ENCODE measurements at regions of chr6 and their contacts with region 1.

Region 1: GRCh38 chr6:25601800-25602673 is 50.0 kb upstream of the SCGN start:
- DNase-seq: no peak
- H3K4me3 Mint-ChIP-seq: no peak overlapping the region
- H3K27ac Mint-ChIP-seq: no peak overlapping the region
- H3K4me1 Mint-ChIP-seq: no peaks in the 10 kb centered on the region
- H3K27me3 Mint-ChIP-seq: no peaks in the 10 kb centered on the region

Region 2: GRCh38 chr6:24861934-24862333 is 740.1 kb before region 1 on chr6:
- intact Hi-C with region 1: loop called (anchors 10 kb)
- DNase-seq: no peak
- H3K4me3 Mint-ChIP-seq: no peak overlapping the region
- H3K27ac Mint-ChIP-seq: peak overlapping the region; percentile 18
- H3K4me1 Mint-ChIP-seq: peaks cover 85% of the 10 kb centered on the region
- H3K27me3 Mint-ChIP-seq: no peaks in the 10 kb centered on the region

Region 3: DNA sequence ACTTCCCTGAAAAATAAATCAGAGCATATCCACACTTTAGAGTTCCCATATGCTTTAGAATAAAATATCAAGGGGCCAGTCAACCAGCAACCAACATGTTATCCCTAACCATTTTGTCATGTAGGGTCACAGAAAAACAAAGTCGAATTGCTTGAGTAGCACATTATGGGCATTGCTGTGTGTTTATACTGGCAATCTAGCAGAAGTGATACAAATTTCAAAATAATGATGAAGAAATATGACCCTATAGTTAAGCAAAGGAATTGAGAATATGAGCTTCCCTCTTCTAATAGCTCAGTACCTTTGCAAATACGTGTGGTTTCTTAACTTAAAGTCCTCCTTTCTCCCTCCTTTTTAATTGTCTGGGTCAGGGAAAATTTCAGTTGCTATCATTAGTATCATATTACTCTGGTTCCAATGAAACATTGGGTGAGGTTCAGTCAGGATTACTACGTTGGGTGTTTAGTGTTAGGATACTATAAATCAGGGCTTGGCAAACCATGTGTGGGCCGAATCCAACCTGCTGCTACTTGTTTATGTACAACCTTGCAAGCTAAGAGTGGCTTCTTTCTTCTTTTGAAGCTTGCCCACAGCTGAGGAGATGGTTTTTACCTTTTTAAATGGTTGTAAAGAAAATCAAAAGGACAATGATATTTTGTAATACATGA is 489.7 kb before region 1 on chr6:
- intact Hi-C with region 1: loop called (anchors 10 kb)
- DNase-seq: no peak
- H3K4me3 Mint-ChIP-seq: no peak overlapping the region
- H3K27ac Mint-ChIP-seq: no peak overlapping the region
- H3K4me1 Mint-ChIP-seq: peaks cover 50% of the 10 kb centered on the region
- H3K27me3 Mint-ChIP-seq: no peaks in the 10 kb centered on the region

Region 4: GRCh38 chr6:25223490-25223991 is 378.5 kb before region 1 on chr6:
- intact Hi-C with region 1: loop called (anchors 1 kb)
- DNase-seq: peak; percentile 24
- H3K4me3 Mint-ChIP-seq: peak overlapping the region; percentile 79
- H3K27ac Mint-ChIP-seq: no peak overlapping the region
- H3K4me1 Mint-ChIP-seq: peaks cover 14% of the 10 kb centered on the region
- H3K27me3 Mint-ChIP-seq: no peaks in the 10 kb centered on the region

Region 5: DNA sequence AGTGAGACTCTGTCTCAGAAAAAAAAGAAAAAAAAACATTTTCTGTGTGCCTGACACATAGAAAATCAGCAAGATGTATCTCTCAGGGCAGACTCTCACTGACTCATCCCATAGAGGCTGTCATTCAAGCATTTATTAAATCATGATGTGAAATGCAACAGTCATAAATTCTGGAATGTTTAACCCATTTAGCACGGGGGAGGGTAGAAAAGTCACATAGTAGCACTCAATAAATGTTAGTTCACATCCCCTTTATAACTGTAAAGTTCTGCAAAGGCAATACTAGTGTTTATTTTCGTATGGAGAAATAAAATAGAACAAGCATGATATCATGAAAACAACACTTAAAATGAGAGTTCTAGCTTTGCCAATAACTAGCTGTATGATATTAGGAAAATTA is 338.4 kb before region 1 on chr6:
- intact Hi-C with region 1: loop called (anchors 1 kb)
- DNase-seq: no peak
- H3K4me3 Mint-ChIP-seq: no peak overlapping the region
- H3K27ac Mint-ChIP-seq: no peak overlapping the region
- H3K4me1 Mint-ChIP-seq: peaks cover 7% of the 10 kb centered on the region
- H3K27me3 Mint-ChIP-seq: peaks cover 26% of the 10 kb centered on the region

Region 6: GRCh38 chr6:25469797-25470388 is 132.1 kb before region 1 on chr6:
- intact Hi-C with region 1: no loop called
- DNase-seq: no peak
- H3K4me3 Mint-ChIP-seq: no peak overlapping the region
- H3K27ac Mint-ChIP-seq: no peak overlapping the region
- H3K4me1 Mint-ChIP-seq: no peaks in the 10 kb centered on the region
- H3K27me3 Mint-ChIP-seq: no peaks in the 10 kb centered on the region

Region 7: DNA sequence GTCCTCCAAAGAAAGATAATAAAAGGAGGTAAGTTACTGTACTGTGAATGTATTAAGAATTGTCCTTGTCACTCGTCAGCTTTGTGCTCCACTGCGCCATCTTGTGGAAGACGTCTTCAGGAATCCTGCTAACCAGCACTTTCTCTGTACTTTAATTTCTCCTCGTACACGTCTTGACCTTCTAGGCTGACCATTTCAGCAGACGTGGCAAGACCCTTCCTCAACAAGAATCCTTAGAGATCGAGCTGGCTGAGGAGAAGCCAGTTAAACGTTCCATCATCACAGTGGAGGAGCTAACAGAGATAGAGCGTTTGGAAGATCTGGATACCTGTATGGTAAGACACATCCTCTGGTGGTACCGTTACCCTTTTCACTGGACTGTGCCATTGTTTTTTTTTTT is 45.5 kb before region 1 on chr6:
- intact Hi-C with region 1: loop called (anchors 1 kb)
- DNase-seq: peak; percentile 52
- H3K4me3 Mint-ChIP-seq: no peak overlapping the region
- H3K27ac Mint-ChIP-seq: no peak overlapping the region
- H3K4me1 Mint-ChIP-seq: no peaks in the 10 kb centered on the region
- H3K27me3 Mint-ChIP-seq: peaks cover 3% of the 10 kb centered on the region

Region 8: DNA sequence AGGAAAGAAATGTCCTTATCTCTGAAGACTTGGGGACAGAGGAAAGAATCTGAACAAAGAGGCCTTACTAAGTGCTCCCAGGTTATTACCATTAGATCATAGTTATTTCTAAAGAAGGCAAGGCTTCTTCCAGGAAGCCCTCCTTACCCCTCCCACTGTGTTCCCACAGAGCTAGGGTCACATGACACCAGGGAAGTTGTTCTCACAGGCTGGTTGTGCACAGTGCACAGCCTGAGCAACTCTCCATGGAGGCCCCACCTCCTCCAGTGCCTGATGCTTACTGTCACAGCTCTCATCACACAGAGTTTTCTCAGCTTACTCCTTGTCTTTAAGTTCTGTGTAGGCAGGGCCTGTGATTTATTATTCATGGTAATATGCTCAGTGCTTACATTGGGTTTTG is 18.9 kb before region 1 on chr6:
- intact Hi-C with region 1: no loop called
- DNase-seq: peak; percentile 6
- H3K4me3 Mint-ChIP-seq: no peak overlapping the region
- H3K27ac Mint-ChIP-seq: no peak overlapping the region
- H3K4me1 Mint-ChIP-seq: peaks cover 34% of the 10 kb centered on the region
- H3K27me3 Mint-ChIP-seq: no peaks in the 10 kb centered on the region

Region 9: DNA sequence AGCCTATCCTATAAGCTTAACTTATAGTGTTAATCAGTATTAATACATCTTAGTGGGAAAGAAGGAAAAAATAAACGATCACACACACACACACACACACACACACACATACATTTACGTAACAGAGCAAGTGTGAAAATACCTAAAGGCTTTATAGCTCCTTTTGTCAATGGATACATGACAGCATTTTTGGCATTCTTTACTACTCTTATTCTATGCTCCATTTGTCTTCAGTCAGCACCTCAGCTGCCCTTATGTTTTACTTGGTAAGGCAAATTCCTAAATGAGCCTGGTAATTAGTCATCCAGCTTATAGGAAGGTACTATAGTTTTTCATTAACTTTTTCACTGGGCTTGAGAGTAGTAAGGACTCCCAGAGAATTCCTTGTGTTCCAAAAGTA is 297.1 kb after region 1 on chr6:
- intact Hi-C with region 1: no loop called
- DNase-seq: no peak
- H3K4me3 Mint-ChIP-seq: no peak overlapping the region
- H3K27ac Mint-ChIP-seq: no peak overlapping the region
- H3K4me1 Mint-ChIP-seq: no peaks in the 10 kb centered on the region
- H3K27me3 Mint-ChIP-seq: peaks cover 2% of the 10 kb centered on the region